AG04449 (cell line): ENCODE measurements at regions of chr11 and their contacts with region 1.

Region 1: DNA sequence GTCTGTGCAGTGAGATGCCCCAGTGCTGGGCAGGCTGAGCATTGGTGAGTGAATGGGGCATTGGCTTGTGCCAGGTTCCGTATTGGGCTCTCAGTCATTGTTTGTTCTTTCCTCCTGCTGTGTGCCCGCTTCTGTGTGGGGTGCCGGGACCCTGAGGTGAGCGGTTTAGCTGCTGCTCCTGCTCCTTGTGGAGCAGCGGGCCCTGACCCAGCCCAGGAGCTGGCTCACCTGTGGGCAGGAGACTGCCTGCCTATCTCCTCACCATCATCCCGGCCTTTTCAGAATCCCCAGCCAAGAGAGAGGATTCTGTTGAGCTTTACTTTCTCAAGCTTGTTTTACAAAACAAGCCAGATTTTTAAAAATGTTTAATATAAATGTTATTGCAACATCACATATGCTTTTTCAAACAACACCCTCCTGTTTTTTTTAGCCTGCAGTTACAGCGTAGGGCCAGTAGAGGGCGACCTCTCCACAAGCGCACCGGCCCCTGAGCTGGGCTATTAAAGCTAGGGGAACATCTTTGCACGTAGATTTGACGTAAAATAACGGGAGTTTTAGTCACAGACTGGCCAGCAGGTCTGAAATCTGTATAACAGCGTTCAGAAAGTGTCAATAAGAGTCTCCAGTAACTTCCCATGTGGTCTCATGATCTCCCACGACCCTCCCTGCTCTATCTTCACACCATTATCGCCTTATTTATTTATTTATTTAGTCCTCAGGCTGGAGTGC is 25.1 kb upstream of the RELT start:
- DNase-seq: no peak
- H3K4me3 ChIP-seq: no peak overlapping the region
- CTCF ChIP-seq: peak; percentile 78

Region 2: DNA sequence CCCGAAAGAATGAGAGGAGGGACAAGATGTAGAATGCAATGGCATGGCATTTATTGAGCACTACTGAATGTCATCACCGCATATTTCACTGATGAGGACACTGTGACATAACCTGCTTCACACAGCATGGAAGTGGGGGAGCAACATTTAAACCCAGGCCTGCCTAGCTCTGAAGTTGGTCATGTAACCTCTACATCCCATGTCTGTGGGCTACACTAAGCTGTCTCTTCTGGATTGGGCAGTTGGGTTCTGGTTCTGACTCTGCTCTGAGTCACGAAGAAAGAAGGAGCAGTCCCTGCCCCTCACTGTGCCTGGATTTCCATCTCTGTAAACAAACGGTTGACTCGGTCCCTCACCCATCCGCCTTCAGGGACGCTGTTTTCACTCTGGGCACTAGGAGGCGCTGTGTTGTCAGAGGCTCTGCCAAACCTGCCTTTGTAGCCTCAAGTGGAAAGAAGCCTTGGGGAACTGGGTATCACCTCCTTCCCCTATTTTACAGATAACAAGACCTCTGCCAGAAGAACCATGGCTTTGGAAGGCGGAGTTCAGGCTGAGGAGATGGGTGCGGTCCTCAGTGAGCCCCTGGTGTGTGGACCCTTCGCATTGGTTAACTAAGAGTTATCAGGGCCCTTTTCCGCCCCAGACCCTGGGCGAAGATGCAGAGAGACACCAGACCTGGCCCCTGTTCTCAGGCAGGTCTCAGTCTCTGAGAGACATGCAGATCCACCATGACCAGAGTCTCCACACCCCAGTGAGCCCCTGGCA is 55.7 kb before region 1 on chr11:
- CTCF ChIA-PET with region 1: interaction called, 29 read pairs
- POLR2A ChIA-PET with region 1: no interaction called
- DNase-seq: no peak
- H3K4me3 ChIP-seq: no peak overlapping the region
- CTCF ChIP-seq: peak; percentile 94

Region 3: GRCh38 chr11:73325036-73325981 is 25.8 kb before region 1 on chr11:
- CTCF ChIA-PET with region 1: interaction called, 34 read pairs
- POLR2A ChIA-PET with region 1: no interaction called
- DNase-seq: no peak
- H3K4me3 ChIP-seq: no peak overlapping the region
- CTCF ChIP-seq: no peak

Region 4: DNA sequence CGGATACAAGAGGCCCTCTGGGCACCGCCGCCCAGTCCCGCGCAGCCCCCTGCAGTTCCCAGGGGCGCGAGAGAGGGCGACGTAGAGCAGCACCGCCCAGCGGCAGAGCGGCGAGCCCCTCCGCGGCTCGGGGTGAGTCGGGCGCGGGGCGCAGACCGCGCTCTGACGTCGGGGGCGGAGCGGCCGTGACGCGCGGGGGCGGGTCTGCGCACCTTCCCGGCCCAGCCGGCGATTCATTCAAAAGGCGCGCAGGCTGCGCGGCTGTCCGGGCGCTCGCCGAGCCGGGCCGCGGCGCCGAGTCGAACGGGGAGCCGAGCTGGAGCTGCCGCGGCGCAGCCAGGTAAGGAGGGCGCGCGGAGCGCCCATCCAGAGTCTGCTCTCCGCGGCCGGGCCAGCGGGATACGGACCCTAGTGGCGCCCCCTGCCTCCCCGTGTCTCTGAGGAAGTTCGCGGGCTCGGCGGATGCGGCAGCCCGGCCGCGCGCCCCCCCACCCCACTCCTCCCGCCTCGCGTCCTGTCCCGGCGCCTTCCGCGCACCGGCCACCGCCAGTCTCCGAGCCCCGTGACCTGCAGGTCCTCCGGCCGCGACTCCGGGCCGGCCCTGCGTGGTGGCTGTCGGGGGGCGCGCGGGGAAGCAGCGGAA is 25.2 kb after region 1 on chr11 and contains the start of gene RELT:
- CTCF ChIA-PET with region 1: interaction called, 263 read pairs
- POLR2A ChIA-PET with region 1: no interaction called
- DNase-seq: no peak
- H3K4me3 ChIP-seq: peak within 1 kb of the TSS; percentile 79
- CTCF ChIP-seq: peak; percentile 89

Region 5: DNA sequence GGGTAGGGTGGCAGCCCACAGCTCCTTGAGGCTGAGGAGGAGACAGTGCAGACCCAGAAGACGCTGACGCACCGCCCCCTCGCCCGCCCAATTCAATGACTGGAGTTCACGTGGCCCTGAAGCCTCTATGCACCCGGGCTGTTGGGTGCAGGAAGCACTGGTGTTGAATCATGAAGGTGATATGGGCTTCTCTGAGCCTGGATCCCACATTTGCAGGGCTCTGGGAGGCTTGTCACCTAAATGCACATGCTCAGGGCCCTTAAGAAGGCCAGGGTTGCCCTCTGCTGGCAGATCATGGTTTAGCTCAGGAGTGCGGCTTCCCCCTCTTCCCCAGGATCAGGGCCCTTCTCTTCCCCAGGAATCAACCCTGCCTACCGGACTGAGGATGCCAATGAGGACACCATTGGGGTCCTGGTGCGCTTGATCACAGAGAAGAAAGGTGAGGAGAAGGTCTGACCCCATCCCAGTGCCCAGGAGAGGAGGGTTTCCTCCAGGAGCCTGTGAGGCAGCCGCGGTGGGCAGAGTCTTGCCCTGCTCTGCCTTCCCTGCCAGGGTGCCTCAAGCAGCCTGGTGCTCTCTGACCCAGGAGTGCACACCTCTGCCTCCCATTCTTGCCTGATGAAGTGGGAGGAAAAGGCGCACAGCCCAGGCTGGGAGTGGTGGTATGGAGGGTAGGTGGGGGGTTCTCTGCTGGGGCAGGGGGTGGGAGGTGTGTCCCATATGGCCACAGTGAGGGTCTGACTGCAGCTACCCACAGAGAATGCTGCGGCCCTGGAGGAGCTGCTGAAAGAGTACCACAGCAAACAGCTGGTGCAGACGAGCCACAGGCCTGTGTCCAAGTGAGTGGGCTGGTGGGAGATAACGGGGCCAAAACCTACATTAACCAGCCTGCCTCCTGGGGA is 42.7 kb after region 1 on chr11:
- CTCF ChIA-PET with region 1: interaction called, 107 read pairs
- POLR2A ChIA-PET with region 1: no interaction called
- DNase-seq: no peak
- H3K4me3 ChIP-seq: no peak overlapping the region
- CTCF ChIP-seq: peak; percentile 86